Heart right ventricle (tissue), 16 donors: ENCODE measurements at regions of chr20 and their contacts with region 1.

Region 1: DNA sequence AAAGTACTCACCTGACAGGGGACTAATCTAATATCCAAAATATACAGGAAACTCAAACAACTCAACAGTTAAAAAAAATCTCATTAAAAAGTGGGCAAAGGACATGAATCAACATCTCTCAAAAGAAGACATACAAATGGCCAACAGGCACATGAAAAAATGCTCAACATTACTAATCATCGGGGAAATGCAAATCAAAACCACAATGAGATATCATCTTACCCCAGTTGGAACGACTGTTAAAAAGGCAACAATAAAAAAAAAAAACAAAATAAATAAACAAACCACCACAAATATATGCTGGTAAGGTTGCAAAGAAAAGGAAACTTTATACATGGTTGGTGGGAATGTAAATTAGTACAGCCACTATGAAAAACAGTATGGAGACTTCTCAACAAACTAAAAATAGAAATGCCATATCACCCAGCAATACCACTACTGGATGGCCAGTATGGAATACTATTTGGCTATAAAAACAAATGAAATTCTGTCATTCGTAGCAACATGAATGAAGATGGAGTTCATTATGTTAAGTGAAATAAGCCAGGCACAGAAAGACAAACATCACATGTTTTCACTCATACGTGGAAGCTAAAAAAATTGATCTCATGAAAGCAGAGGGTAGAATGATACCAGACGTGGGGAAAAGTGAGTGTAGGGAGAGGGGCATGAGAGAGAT is 6.6 kb downstream of the SIRPB2 start:
- DNase-seq: no peak
- ATAC-seq: no peak
- H3K4me3 ChIP-seq: no peak overlapping the region
- H3K27ac ChIP-seq: no peak overlapping the region
- H3K4me1 ChIP-seq: peaks cover 0 to 51% (median 0%) of the 10 kb centered on the region in 9 donors
- H3K27me3 ChIP-seq: peaks cover 0 to 7% (median 4%) of the 10 kb centered on the region in 7 donors
- CTCF ChIP-seq: no peak

Region 2: GRCh38 chr20:1450926-1451491 is 33.6 kb before region 1 on chr20:
- intact Hi-C with region 1: loop called in 1 of 10 experiments (anchors 1 kb)
- DNase-seq: no peak
- ATAC-seq: peak in 1 of 8 donors; percentile 13
- H3K4me3 ChIP-seq: no peak overlapping the region
- H3K27ac ChIP-seq: no peak overlapping the region
- H3K4me1 ChIP-seq: no peaks in the 10 kb centered on the region
- H3K27me3 ChIP-seq: no peaks in the 10 kb centered on the region
- CTCF ChIP-seq: no peak

Region 3: GRCh38 chr20:2255926-2256531 is 771.5 kb after region 1 on chr20:
- intact Hi-C with region 1: loop called in 1 of 10 experiments (anchors 5 kb)
- DNase-seq: no peak
- ATAC-seq: no peak
- H3K4me3 ChIP-seq: no peak overlapping the region
- H3K27ac ChIP-seq: no peak overlapping the region
- H3K4me1 ChIP-seq: peaks cover 0 to 25% (median 0%) of the 10 kb centered on the region in 9 donors
- H3K27me3 ChIP-seq: peaks cover 0 to 39% (median 0%) of the 10 kb centered on the region in 7 donors
- CTCF ChIP-seq: no peak